Activated B cell treated with CpG ODN at 0.5 μM for 24 hours (primary cell): ENCODE measurements at regions of chr6 and their contacts with region 1.

Region 1: GRCh38 chr6:53359072-53359842 is 10.5 kb upstream of the ELOVL5 start:
- DNase-seq: peak; percentile 91
- ATAC-seq: peak; percentile 92
- H3K4me3 Mint-ChIP-seq: peak overlapping the region; percentile 92
- H3K27ac Mint-ChIP-seq: peak overlapping the region; percentile 99
- H3K4me1 Mint-ChIP-seq: peaks cover 59% of the 10 kb centered on the region
- H3K27me3 Mint-ChIP-seq: no peaks in the 10 kb centered on the region
- CTCF ChIP-seq: no peak

Region 2: GRCh38 chr6:52297433-52297832 is 1061.8 kb before region 1 on chr6:
- CTCF ChIA-PET with region 1: no interaction called
- POLR2A ChIA-PET with region 1: no interaction called
- intact Hi-C with region 1: loop called (anchors 10 kb)
- DNase-seq: no peak
- ATAC-seq: peak; percentile 38
- H3K4me3 Mint-ChIP-seq: peak overlapping the region; percentile 76
- H3K27ac Mint-ChIP-seq: peak overlapping the region; percentile 99
- H3K4me1 Mint-ChIP-seq: peaks cover 38% of the 10 kb centered on the region
- H3K27me3 Mint-ChIP-seq: no peaks in the 10 kb centered on the region
- CTCF ChIP-seq: no peak

Region 3: DNA sequence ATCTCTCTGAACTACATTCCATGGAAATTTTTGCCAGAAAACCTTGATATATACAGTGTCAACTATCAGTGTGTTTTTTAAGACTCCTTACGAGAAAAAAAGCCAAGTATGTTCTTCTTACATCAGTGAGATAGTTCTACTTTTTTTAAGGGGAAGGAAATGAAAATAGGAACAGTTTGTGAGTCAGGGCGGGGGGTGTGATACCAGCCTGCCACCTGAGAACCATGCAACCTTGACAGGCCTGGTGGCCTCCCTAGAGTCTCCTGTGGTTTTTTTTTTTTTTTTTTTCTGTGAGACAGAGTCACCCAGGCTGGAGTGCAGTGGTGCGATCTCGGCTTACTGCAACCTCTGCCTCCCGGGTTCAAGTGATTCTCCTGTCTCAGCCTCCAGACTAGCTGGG is 114.3 kb before region 1 on chr6:
- CTCF ChIA-PET with region 1: no interaction called
- POLR2A ChIA-PET with region 1: interaction called, 14 read pairs
- intact Hi-C with region 1: no loop called
- DNase-seq: peak; percentile 42
- ATAC-seq: peak; percentile 83
- H3K4me3 Mint-ChIP-seq: peak overlapping the region; percentile 63
- H3K27ac Mint-ChIP-seq: peak overlapping the region; percentile 96
- H3K4me1 Mint-ChIP-seq: peaks cover 93% of the 10 kb centered on the region
- H3K27me3 Mint-ChIP-seq: no peaks in the 10 kb centered on the region
- CTCF ChIP-seq: no peak

Region 4: GRCh38 chr6:53309059-53309900 is 50.0 kb before region 1 on chr6:
- CTCF ChIA-PET with region 1: no interaction called
- POLR2A ChIA-PET with region 1: interaction called, 10 read pairs
- intact Hi-C with region 1: no loop called
- DNase-seq: no peak
- ATAC-seq: peak; percentile 34
- H3K4me3 Mint-ChIP-seq: peak overlapping the region; percentile 57
- H3K27ac Mint-ChIP-seq: peak overlapping the region; percentile 92
- H3K4me1 Mint-ChIP-seq: peaks cover 84% of the 10 kb centered on the region
- H3K27me3 Mint-ChIP-seq: no peaks in the 10 kb centered on the region
- CTCF ChIP-seq: no peak

Region 5: DNA sequence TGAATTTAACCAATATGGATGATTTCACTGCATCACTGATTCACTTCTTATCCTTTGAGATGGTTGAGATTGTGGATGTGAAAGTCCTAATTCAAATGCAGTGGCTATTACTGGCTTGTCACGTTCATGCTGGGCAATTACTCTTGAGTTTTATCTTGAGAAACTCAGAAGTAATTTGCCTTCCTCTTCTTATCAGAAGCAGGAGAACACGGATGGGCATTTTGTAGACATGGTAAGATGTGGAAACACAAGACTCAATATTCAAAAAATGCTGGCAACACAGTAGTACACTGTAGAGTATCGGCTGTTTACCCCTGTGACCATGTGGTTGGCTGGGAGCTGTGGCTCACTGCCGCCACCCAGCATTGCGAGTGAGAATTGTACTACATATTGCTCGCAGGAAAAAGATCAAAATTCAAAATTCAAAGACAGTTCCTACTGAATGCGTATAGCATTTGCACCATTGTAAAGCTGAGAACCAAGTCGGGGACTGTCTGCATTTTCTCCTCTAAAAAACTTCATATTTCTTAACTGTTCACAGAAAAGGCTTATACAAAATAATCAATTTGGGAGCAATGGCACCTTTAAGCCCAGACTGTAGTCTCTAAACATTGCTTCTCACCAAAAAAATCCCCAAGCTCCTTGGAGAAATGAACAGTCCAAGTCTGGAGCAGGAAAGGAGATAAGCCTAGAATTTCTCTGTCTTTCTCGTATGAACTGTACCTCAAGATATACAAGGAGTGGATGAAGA is 51.4 kb after region 1 on chr6:
- CTCF ChIA-PET with region 1: no interaction called
- POLR2A ChIA-PET with region 1: interaction called, 9 read pairs
- intact Hi-C with region 1: loop called (anchors 1 kb)
- DNase-seq: peak; percentile 20
- ATAC-seq: peak; percentile 98
- H3K4me3 Mint-ChIP-seq: peak overlapping the region; percentile 70
- H3K27ac Mint-ChIP-seq: peak overlapping the region; percentile 82
- H3K4me1 Mint-ChIP-seq: peaks cover 9% of the 10 kb centered on the region
- H3K27me3 Mint-ChIP-seq: no peaks in the 10 kb centered on the region
- CTCF ChIP-seq: no peak